ENCODE measurements at regions of chr2 and their contacts with region 1.

Region 1: GRCh38 chr2:112275306-112275886 is at the start of gene ZC3H6:
- DNase-seq: peak; percentile 98
- H3K4me3 ChIP-seq: peak within 1 kb of the TSS; percentile 67 to 98 (median 94)
- H3K27ac ChIP-seq: peak within 1 kb of the TSS; percentile 98
- H3K4me1 ChIP-seq: peaks cover 9% of the 10 kb centered on the region
- H3K27me3 ChIP-seq: no peaks in the 10 kb centered on the region
- CTCF ChIP-seq: peak in 1 of 2 donors; percentile 12
- POLR2A ChIP-seq: peak; percentile 95
- total RNA-seq, gene ZC3H6: 2.5 and 3.0 TPM in 2 replicates

Region 2: GRCh38 chr2:112187805-112188596 is 87.4 kb before region 1 on chr2:
- CTCF ChIA-PET with region 1: no interaction called
- POLR2A ChIA-PET with region 1: no interaction called
- dilution Hi-C with region 1: no loop called
- intact Hi-C with region 1: no loop called
- DNase-seq: peak; percentile 75
- H3K4me3 ChIP-seq: no peak overlapping the region
- H3K27ac ChIP-seq: peak overlapping the region; percentile 73
- H3K4me1 ChIP-seq: peaks cover 20% of the 10 kb centered on the region
- H3K27me3 ChIP-seq: no peaks in the 10 kb centered on the region
- CTCF ChIP-seq: no peak
- POLR2A ChIP-seq: no peak

Region 3: GRCh38 chr2:112301171-112301584 is 25.8 kb after region 1 on chr2:
- CTCF ChIA-PET with region 1: no interaction called
- POLR2A ChIA-PET with region 1: no interaction called
- dilution Hi-C with region 1: no loop called
- intact Hi-C with region 1: loop called (anchors 2 kb)
- DNase-seq: peak; percentile 85
- H3K4me3 ChIP-seq: no peak overlapping the region
- H3K27ac ChIP-seq: peak overlapping the region; percentile 73
- H3K4me1 ChIP-seq: peaks cover 28% of the 10 kb centered on the region
- H3K27me3 ChIP-seq: no peaks in the 10 kb centered on the region
- CTCF ChIP-seq: no peak
- POLR2A ChIP-seq: peak; percentile 48

Region 4: GRCh38 chr2:114231921-114232320 is 1956.5 kb after region 1 on chr2:
- CTCF ChIA-PET with region 1: no interaction called
- POLR2A ChIA-PET with region 1: no interaction called
- dilution Hi-C with region 1: no loop called
- intact Hi-C with region 1: no loop called
- DNase-seq: no peak
- H3K4me3 ChIP-seq: no peak overlapping the region
- H3K27ac ChIP-seq: no peak overlapping the region
- H3K4me1 ChIP-seq: no peaks in the 10 kb centered on the region
- H3K27me3 ChIP-seq: no peaks in the 10 kb centered on the region
- CTCF ChIP-seq: no peak
- POLR2A ChIP-seq: no peak